ENCODE measurements at regions of chr15 and their contacts with region 1.

Region 1: DNA sequence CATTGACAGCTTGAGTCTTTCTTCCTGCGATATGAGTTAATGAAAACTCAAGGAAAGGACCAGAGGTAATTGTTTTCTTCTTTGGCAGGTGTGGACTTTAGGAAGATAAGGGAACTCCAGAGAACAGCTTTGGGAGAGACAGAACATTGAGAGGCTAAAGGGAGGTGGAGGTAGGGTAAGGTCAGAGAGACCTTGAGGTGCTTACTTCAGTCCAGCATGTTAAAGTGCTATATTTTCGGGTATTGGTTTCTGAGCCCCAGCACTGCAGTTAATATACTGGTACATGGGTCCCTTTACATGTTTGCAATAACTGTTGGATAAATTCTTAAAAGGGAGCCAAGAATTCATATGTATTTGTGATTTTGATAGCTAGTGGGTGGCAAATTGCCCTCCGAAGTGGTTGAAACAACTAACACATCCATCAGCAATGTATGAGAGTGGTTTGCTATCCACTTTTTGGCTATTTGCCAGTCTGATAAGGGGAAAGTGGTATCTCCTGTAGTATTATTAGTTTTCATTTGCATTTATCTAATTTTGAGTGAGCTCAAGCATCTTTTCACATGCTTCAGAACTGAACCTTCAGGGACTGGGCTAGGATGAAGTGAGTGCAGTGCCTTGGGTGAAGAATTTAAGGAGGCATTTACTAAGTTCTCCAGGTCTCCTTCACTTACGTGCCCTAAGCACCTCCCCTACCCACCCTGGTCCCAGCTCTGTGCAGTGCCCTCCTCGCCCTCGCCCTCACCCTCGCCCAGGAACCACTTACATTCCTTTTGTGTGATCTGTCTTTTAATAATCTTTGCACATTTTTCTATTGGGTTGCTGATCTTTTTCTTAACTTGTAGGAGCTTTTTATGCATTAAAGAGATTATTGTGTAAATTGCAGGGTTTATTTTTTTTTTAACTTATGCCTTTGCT is 322.4 kb downstream of the THSD4 start:
- DNase-seq: no peak
- ATAC-seq: no peak
- H3K4me3 ChIP-seq: no peak overlapping the region
- H3K27ac ChIP-seq: no peak overlapping the region
- H3K4me1 ChIP-seq: peaks cover 3% of the 10 kb centered on the region
- H3K27me3 ChIP-seq: no peaks in the 10 kb centered on the region
- CTCF ChIP-seq: no peak

Region 2: GRCh38 chr15:70892002-70892914 is 545.4 kb before region 1 on chr15 and contains the starts of genes LRRC49 and THAP10:
- intact Hi-C with region 1: loop called in 1 of 2 experiments (anchors 10 kb)
- DNase-seq: peak; percentile 89 to 93
- ATAC-seq: peak; percentile 97 to 99 (median 98)
- H3K4me3 ChIP-seq: peak within 1 kb of the TSS; percentile 92
- H3K27ac ChIP-seq: peak within 1 kb of the TSS; percentile 60
- H3K4me1 ChIP-seq: no peaks in the 10 kb centered on the region
- H3K27me3 ChIP-seq: no peaks in the 10 kb centered on the region
- CTCF ChIP-seq: no peak
- total RNA-seq, gene LRRC49: 1.1 to 4.4 (median 2.0) TPM
- total RNA-seq, gene THAP10: 0.76 to 1.7 (median 1.3) TPM

Region 3: GRCh38 chr15:71167828-71168477 is 269.7 kb before region 1 on chr15:
- intact Hi-C with region 1: no loop called
- DNase-seq: no peak
- ATAC-seq: no peak
- H3K4me3 ChIP-seq: no peak overlapping the region
- H3K27ac ChIP-seq: no peak overlapping the region
- H3K4me1 ChIP-seq: no peaks in the 10 kb centered on the region
- H3K27me3 ChIP-seq: no peaks in the 10 kb centered on the region
- CTCF ChIP-seq: no peak

Region 4: DNA sequence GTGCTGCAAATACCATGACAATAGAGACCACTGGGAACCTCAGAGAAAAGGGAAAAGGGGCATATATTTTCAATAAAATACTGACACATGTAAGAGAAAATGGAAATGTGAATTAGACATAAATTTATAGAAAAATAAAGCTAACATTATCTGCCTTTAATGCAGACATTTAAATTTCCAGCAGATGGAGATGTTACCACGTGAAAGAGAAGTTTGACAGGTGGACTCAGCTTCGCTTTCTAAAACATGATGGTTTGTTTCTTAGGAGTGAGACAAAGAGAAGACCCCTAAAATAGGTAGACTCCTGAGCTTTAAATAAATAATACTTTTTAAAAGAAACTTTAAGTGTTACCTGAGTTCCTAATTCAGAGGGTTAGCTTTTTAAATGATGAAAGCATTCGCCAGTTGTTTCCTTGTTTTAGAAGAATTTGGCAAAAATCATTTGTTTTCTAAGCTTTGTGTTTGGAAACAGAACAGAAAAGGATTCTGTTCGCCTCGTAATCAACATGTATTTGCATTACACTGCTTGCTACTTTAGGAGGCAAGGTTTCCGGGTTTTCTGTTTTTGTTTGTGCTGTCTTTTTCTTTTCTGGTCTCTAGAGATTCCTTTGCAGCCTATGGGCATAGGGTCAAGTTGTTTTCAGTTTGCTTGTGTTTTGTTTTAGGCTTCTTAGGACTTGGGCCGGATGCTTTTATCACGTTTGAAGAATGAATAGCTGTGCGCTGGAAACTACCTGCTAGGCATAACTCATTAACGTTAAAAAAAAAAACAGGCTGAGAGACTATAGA is 51.0 kb before region 1 on chr15:
- intact Hi-C with region 1: loop called (anchors 1 to 2 kb)
- DNase-seq: no peak
- ATAC-seq: peak in 2 of 4 donors; percentile 64 to 79
- H3K4me3 ChIP-seq: no peak overlapping the region
- H3K27ac ChIP-seq: no peak overlapping the region
- H3K4me1 ChIP-seq: peaks cover 19% of the 10 kb centered on the region
- H3K27me3 ChIP-seq: no peaks in the 10 kb centered on the region
- CTCF ChIP-seq: peak; percentile 64

Region 5: GRCh38 chr15:72047020-72047419 is 609.4 kb after region 1 on chr15:
- intact Hi-C with region 1: no loop called
- DNase-seq: no peak
- ATAC-seq: no peak
- H3K4me3 ChIP-seq: no peak overlapping the region
- H3K27ac ChIP-seq: no peak overlapping the region
- H3K4me1 ChIP-seq: peaks cover 16% of the 10 kb centered on the region
- H3K27me3 ChIP-seq: no peaks in the 10 kb centered on the region
- CTCF ChIP-seq: no peak